Heart left ventricle (tissue), 16 donors: ENCODE measurements at regions of chr1 and their contacts with region 1.

Region 1: DNA sequence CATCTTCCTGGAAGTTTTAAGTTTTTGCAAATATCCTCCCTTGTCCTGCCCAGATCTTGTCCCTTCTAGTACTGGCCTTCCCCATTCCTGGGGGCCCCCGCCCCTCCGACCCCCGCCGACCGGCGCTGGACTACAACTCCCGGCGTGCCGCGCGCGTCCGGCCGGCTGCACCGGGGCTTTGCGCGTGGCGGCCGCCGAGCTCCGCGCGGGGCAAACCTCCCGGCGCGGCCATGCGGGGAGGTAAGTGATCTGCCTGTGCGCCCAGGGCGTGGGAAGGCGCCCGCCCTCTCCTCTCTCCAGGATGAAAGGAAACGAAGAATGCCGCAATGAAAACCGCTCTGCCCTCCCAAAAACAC is 3.2 kb upstream of the SAMD13 start:
- DNase-seq: peak; percentile 61 to 83 (median 66)
- ATAC-seq: peak; percentile 72 to 91 (median 82)
- H3K4me3 ChIP-seq: peak overlapping the region; percentile 69 to 93 (median 82)
- H3K27ac ChIP-seq: peak overlapping the region; percentile 78 to 92 (median 86)
- H3K4me1 ChIP-seq: peaks cover 0 to 42% (median 27%) of the 10 kb centered on the region in 12 donors
- H3K27me3 ChIP-seq: no peaks in the 10 kb centered on the region
- CTCF ChIP-seq: no peak
- POLR2A ChIP-seq: peak in 1 of 2 donors; percentile 59

Region 2: DNA sequence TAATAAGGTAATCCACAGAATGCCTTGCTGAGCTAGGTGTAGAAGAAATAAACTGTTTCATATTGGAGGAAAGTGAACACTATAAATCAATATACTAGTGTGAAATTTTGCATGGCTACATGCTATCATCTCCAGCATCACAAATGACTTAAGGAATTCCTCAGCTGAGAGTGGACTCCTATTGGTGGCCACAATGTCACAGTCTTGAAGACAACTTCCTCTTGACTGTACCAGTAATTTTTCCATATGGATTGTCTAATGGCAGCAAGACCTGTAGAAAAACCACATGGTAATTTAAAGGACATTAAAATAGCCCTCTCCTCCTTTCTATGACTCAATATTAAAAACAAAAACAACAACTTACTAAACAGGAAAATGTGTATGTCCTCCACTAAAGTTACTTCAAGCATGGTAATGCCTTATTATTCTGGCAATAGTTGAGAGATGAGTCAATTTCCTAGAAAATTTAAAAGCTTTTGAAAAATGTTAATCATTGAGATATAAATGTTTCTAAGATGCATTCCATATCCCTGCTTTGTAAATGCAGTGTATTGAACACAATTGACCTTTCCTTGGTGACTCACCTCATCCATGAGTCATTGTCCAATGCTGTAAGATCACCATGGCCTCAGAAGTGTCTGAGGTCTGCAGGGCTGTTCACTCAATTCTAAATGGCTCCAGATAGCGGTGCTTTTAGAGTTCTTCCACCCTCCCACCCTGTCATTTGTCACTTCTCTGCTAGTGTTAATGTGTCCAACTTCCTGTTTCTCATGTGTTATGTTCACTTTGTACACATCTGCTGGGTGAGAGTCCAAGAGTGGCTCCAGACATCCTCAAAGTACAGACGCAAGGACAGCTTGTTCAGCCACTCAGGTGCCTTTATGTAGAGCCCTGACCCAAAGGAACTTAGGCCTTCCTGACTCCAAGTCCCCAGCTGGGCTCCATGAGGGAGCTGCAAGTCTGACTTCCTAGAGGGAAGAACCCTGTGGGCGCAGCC is 67.2 kb after region 1 on chr1:
- intact Hi-C with region 1: no loop called
- DNase-seq: no peak
- ATAC-seq: peak in 2 of 4 donors; percentile 72 to 90
- H3K4me3 ChIP-seq: no peak overlapping the region
- H3K27ac ChIP-seq: peak overlapping the region in 2 of 12 donors; percentile 18 to 49
- H3K4me1 ChIP-seq: peaks cover 0 to 12% (median 0%) of the 10 kb centered on the region in 12 donors
- H3K27me3 ChIP-seq: no peaks in the 10 kb centered on the region
- CTCF ChIP-seq: no peak
- POLR2A ChIP-seq: no peak

Region 3: GRCh38 chr1:84377480-84378095 is 79.3 kb after region 1 on chr1:
- intact Hi-C with region 1: loop called in 1 of 10 experiments (anchors 5 kb)
- DNase-seq: peak in 2 of 5 donors; percentile 46 to 50
- ATAC-seq: peak; percentile 45 to 78 (median 65)
- H3K4me3 ChIP-seq: no peak overlapping the region
- H3K27ac ChIP-seq: no peak overlapping the region
- H3K4me1 ChIP-seq: peaks cover 0 to 34% (median 5%) of the 10 kb centered on the region in 12 donors
- H3K27me3 ChIP-seq: no peaks in the 10 kb centered on the region
- CTCF ChIP-seq: no peak
- POLR2A ChIP-seq: no peak

Region 4: GRCh38 chr1:84690397-84691121 is 392.3 kb after region 1 on chr1 and contains the start of gene SSX2IP:
- intact Hi-C with region 1: loop called in 1 of 10 experiments (anchors 10 kb)
- DNase-seq: peak; percentile 97 to 99 (median 98)
- ATAC-seq: peak; percentile 97 to 99 (median 98)
- H3K4me3 ChIP-seq: peak within 1 kb of the TSS; percentile 65 to 96 (median 88)
- H3K27ac ChIP-seq: peak within 1 kb of the TSS; percentile 31 to 90 (median 83)
- H3K4me1 ChIP-seq: peaks cover 0 to 31% (median 10%) of the 10 kb centered on the region in 12 donors
- H3K27me3 ChIP-seq: no peaks in the 10 kb centered on the region
- CTCF ChIP-seq: no peak
- POLR2A ChIP-seq: peak in 1 of 2 donors; percentile 68
- total RNA-seq, gene SSX2IP: 4.5 to 18.5 (median 13.7) TPM